PC-9 (cell line): ENCODE measurements at regions of chr10 and their contacts with region 1.

Region 1: GRCh38 chr10:60208676-60209269 is 180.9 kb downstream of the ANK3 start:
- DNase-seq: peak in 1 of 2 experiments; percentile 60
- H3K4me3 ChIP-seq: no peak overlapping the region
- H3K27ac ChIP-seq: no peak overlapping the region
- H3K4me1 ChIP-seq: peaks cover 8% of the 10 kb centered on the region
- H3K27me3 ChIP-seq: no peaks in the 10 kb centered on the region
- CTCF ChIP-seq: peak; percentile 89

Region 2: DNA sequence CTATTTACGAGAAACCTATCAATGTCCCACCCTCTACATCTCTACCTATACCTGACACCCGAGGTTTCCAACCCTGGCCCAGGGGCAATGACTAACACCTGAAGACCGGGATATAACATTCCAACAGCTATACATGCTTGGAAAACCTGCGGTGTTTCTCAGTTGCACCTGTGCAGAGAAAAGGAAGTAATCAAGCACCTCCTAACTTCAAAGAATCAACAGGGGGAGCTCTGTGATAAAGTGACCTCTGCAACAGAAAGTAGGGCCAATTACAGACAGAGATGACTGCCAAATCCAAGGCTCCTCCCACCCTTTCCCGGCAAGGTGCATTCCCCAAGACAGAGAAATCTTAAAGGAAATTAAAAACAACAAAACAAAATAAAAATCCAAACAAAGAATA is 343.7 kb before region 1 on chr10:
- CTCF ChIA-PET with region 1: no interaction called
- POLR2A ChIA-PET with region 1: no interaction called
- intact Hi-C with region 1: loop called (anchors 2 kb)
- DNase-seq: peak; percentile 79 to 94
- H3K4me3 ChIP-seq: no peak overlapping the region
- H3K27ac ChIP-seq: peak overlapping the region; percentile 46
- H3K4me1 ChIP-seq: peaks cover 24% of the 10 kb centered on the region
- H3K27me3 ChIP-seq: no peaks in the 10 kb centered on the region
- CTCF ChIP-seq: peak; percentile 57; the same call in 1 of the 2 replicates

Region 3: DNA sequence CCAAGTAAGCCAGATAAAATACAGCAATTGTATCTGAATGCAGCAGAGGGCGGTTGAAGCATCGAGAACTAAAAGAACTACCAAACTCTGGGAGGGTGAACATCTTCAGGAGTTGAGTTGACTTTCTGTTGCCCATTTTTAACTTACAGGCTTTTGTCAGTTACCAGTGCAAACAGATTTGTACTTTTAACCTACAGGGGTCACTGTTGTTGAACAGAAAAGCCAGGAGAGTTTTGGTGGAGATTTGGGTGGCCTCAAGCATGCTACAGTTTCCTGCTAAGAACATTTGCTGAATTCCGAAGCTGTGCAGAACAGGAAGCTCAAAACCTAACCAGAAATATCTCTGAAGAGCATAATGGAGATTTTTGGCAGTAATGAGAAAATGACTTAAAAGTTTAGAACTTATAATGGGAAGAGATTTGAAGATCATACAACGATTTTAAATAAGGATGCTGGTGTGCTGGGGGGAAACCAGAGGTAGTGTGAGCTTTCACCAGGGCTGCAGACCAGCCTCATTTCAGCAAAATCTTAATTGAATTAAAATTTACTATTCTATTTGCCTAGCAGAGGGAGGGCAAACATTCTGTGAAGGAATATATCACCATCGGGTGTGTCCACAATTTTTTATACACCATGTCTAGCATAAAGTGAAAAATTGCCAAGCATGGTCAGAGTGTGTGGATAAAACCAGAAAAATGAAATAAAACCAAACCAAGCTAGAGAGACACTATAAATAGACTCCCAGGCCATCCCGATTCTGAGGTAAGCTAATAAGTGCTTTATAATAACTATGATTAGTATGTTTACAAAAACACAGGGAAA is 93.8 kb before region 1 on chr10:
- CTCF ChIA-PET with region 1: interaction called, 14 read pairs
- POLR2A ChIA-PET with region 1: no interaction called
- intact Hi-C with region 1: loop called (anchors 1 kb)
- DNase-seq: peak in 1 of 2 experiments; percentile 16
- H3K4me3 ChIP-seq: no peak overlapping the region
- H3K27ac ChIP-seq: no peak overlapping the region
- H3K4me1 ChIP-seq: no peaks in the 10 kb centered on the region
- H3K27me3 ChIP-seq: no peaks in the 10 kb centered on the region
- CTCF ChIP-seq: peak; percentile 76

Region 4: GRCh38 chr10:60140651-60141632 is 67.8 kb before region 1 on chr10:
- CTCF ChIA-PET with region 1: interaction called, 5 read pairs
- POLR2A ChIA-PET with region 1: no interaction called
- intact Hi-C with region 1: loop called (anchors 2 kb)
- DNase-seq: peak; percentile 67 to 68
- H3K4me3 ChIP-seq: peak overlapping the region; percentile 20; the same call in 1 of the 2 replicates
- H3K27ac ChIP-seq: peak overlapping the region; percentile 84
- H3K4me1 ChIP-seq: peaks cover 55% of the 10 kb centered on the region
- H3K27me3 ChIP-seq: no peaks in the 10 kb centered on the region
- CTCF ChIP-seq: no peak

Region 5: DNA sequence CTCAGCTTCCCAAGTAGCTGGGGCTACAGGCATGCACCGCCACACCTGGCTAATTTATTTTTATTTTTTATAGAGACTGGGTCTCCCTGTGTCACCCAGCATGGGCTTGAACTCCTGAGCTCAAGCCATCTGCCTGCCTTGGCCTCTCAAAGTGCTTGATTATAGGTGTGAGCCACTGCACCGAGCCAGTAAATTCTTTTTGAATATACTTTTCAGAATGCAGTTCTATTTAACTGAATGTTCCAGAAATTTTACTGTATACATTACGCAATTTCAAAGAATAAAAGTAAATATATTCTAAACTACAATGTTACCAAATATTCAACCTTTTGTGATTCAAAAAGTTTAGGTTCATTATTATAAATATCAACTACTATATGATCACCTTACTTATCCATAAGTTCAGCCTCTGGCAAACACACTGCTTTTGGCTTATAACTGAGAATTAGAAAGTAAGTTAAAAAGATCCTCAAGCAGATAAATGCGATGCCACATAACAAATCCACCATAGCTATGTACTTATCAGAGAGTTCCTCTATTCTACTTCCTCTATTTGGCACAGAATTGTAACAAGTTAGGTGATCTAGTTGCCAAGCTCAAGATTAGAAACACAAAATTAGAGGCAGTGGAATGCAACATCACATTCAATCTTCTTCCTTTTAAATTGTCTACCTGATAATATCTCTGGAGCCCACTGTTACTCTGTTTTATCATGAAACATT is 62.7 kb after region 1 on chr10:
- CTCF ChIA-PET with region 1: no interaction called
- POLR2A ChIA-PET with region 1: no interaction called
- intact Hi-C with region 1: no loop called
- DNase-seq: no peak
- H3K4me3 ChIP-seq: no peak overlapping the region
- H3K27ac ChIP-seq: no peak overlapping the region
- H3K4me1 ChIP-seq: no peaks in the 10 kb centered on the region
- H3K27me3 ChIP-seq: no peaks in the 10 kb centered on the region
- CTCF ChIP-seq: no peak